OCI-LY7 (cell line): ENCODE measurements at regions of chr4 and their contacts with region 1.

Region 1: GRCh38 chr4:26670903-26671537 is 87.1 kb downstream of the TBC1D19 start:
- DNase-seq: no peak
- H3K4me3 ChIP-seq: no peak overlapping the region
- H3K27ac ChIP-seq: no peak overlapping the region
- H3K4me1 ChIP-seq: no peaks in the 10 kb centered on the region
- CTCF ChIP-seq: no peak

Region 2: DNA sequence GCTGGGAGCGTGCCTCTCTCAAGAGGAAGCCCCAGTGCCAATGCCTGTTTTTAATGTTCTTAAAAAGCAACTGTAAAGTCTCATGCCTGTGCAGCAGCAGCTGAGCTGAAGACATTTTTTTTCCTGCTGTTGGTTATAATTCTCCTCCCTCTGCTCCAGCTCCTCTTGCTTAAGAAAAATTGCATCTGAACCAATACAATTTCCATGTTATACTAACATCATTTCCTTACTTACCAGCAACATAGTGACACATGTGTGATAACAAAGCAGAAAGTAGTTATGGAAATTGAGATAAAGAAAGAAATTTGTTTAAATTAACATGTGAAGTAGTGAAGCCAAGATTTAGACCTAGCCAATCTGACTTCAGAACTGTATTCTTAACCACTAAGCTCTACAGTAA is 14.2 kb after region 1 on chr4:
- CTCF ChIA-PET with region 1: no interaction called
- POLR2A ChIA-PET with region 1: interaction called, 14 read pairs
- intact Hi-C with region 1: no loop called
- DNase-seq: no peak
- H3K4me3 ChIP-seq: no peak overlapping the region
- H3K27ac ChIP-seq: no peak overlapping the region
- H3K4me1 ChIP-seq: no peaks in the 10 kb centered on the region
- CTCF ChIP-seq: no peak

Region 3: DNA sequence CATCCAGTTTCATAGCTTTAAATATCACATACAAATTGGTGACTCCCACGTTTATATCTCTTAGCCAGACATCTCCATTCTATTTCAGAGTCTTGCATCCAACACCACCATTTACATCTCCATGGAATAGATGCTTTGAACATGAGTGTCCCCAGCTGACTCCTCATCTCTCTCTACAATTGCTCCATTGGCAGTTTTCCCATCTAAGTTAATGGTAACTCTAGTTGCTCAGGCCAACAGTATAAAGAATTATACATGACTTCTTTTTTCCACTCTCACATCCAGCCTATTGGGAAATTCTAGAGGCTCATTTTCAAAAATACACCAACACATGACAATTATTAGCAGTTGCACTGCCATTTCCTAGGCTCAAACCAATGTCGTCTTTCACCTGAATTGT is 577.8 kb after region 1 on chr4:
- CTCF ChIA-PET with region 1: no interaction called
- POLR2A ChIA-PET with region 1: no interaction called
- intact Hi-C with region 1: no loop called
- DNase-seq: no peak
- H3K4me3 ChIP-seq: no peak overlapping the region
- H3K27ac ChIP-seq: no peak overlapping the region
- H3K4me1 ChIP-seq: no peaks in the 10 kb centered on the region
- CTCF ChIP-seq: no peak